K562 (cell line): ENCODE measurements at regions of chr9 and their contacts with region 1.

Region 1: DNA sequence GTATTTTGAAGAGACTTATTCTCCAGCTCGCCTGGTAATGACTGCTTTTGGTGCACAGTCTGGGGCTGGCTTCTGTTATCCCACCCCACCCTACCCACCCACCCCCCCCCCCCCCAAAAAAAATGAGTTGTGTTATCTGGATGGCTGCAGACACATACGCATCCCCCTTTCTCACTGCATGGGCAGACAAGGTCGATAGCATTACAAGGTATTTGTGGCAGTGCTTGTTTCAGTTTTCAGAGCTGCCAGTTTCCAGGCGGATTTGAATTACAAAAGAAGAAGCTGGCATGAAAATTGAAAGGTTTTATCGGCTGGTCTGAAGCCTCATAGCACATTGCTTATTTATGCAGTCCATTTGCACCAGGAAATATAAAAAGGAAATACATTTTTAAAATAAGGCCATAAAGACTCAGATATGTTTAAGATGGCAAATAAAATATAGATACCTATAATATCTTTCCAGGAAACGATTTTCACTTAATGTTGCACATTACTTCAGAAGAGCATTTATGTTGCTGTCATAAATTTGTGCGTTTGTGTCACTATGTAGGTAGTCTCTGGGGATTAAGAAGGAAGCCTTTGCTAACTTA is 85.1 kb upstream of the GRHPR start:
- DNase-seq: peak; percentile 68 to 89 (median 80)
- ATAC-seq: peak; percentile 78
- H3K4me3 ChIP-seq: no peak overlapping the region
- H3K27ac ChIP-seq: peak overlapping the region; percentile 47
- H3K4me1 ChIP-seq: peaks cover 0 to 30% of the 10 kb centered on the region in 2 experiments; a peak in 3 of 5 replicates
- H3K27me3 ChIP-seq: no peaks in the 10 kb centered on the region
- CTCF ChIP-seq: no peak
- EP300 ChIP-seq: peak; percentile 48; the same call in 1 of the 2 replicates
- POLR2A ChIP-seq: no peak
- RAD21 ChIP-seq: no peak

Region 2: DNA sequence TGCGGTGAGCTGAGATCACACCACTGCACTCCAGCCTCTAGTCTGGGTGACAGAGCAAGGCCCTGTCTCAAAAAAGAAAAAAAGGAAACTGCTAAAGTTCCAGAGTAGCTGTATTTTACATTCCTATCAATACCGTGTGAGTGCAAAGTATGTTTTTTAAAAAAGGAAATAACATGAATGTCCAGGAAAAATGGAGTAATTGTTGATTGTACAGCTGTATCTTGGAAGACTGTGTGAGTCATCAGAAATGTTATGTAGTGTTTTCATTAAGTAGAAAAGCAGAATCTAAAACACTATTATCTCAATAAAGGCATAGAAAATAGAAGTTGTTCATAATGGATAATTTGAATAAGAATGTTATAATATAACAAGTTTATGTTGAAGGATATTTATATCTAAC is 163.1 kb before region 1 on chr9:
- CTCF ChIA-PET with region 1: no interaction called
- POLR2A ChIA-PET with region 1: no interaction called
- in situ Hi-C with region 1: no loop called
- intact Hi-C with region 1: no loop called
- DNase-seq: no peak
- ATAC-seq: no peak
- H3K4me3 ChIP-seq: no peak overlapping the region
- H3K27ac ChIP-seq: no peak overlapping the region
- H3K4me1 ChIP-seq: no peaks in the 10 kb centered on the region
- H3K27me3 ChIP-seq: no peaks in the 10 kb centered on the region
- CTCF ChIP-seq: no peak
- EP300 ChIP-seq: no peak
- POLR2A ChIP-seq: no peak
- RAD21 ChIP-seq: no peak

Region 3: DNA sequence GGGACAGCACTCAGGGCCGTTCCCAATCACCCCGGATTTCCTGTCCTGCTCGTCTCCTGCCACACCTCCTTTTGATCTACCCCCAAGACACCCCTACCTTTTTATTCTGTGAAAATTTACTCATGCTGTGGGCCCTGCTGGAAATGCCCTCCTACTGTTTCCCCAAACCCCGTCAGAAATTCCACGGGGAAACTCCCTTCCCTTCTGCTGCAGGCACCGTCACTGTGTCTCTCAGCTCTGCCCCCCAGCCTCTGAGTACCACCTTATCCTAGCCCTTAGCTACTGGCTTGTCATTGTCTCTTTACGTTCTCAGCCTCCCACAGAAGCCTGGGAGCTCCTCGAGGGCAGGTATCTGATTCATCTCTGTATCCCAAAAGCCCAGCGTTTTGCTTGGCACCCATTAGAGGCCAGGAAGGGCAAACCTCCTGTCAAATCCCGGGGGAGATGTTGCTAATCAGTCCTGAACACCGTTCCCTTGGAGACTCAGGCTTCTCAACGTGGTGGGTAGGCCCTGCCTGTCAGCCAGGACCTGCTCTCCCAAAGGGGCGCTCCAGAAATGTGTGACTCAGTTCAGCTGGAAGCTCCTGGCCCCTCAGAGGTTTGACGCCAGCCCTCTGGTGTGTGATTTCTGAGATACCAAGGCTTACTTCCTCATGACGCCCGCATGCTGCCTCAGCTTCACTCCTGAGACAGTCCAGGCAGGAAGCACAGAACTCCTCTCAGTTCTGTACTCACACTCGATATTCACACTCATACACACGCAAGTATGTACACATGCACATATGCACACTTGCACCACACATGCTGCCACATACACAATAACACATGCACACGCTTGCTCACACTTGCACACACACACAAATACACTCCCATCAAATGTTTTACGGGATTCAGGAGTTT is 34.4 kb after region 1 on chr9:
- CTCF ChIA-PET with region 1: no interaction called
- POLR2A ChIA-PET with region 1: no interaction called
- in situ Hi-C with region 1: no loop called
- intact Hi-C with region 1: no loop called
- DNase-seq: peak in 1 of 4 experiments; percentile 33
- ATAC-seq: no peak; the same call in 2 of the 3 replicates
- H3K4me3 ChIP-seq: no peak overlapping the region
- H3K27ac ChIP-seq: no peak overlapping the region
- H3K4me1 ChIP-seq: peaks cover 4 to 5% of the 10 kb centered on the region in 2 experiments; a peak in 2 of 5 replicates
- H3K27me3 ChIP-seq: peaks cover under 1 to 7% of the 10 kb centered on the region in 2 experiments; a peak in 3 of 5 replicates
- CTCF ChIP-seq: no peak
- EP300 ChIP-seq: no peak
- POLR2A ChIP-seq: no peak
- RAD21 ChIP-seq: no peak

Region 4: DNA sequence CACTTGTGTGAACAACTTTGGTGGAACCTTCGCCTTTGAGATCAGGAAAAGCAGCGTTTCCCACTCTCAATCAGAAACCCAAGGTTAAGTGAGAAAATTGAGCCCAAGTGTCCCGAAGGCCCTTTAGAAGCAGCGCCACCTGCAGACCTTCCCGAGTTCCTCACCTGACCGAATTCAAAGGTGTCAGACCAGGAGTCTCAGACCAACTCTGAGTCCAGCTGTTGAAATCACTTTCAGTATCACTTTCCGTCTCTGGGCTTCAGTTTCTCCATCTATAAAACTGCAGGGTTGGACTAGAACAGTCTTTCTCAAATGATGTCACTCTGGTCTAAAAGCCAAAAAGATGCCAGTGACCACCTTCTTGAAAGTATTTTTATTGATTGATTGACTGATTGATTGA is 53.4 kb after region 1 on chr9:
- CTCF ChIA-PET with region 1: no interaction called
- POLR2A ChIA-PET with region 1: no interaction called
- in situ Hi-C with region 1: no loop called
- intact Hi-C with region 1: loop called (anchors 5 kb)
- DNase-seq: peak; percentile 59 to 80 (median 66)
- ATAC-seq: peak; percentile 79
- H3K4me3 ChIP-seq: no peak overlapping the region
- H3K27ac ChIP-seq: no peak overlapping the region
- H3K4me1 ChIP-seq: peaks cover 7 to 8% of the 10 kb centered on the region in 2 experiments; a peak in 2 of 5 replicates
- H3K27me3 ChIP-seq: 0 out of 5 replicates have a peak, but pooled peaks cover 0 to 4% of the 10 kb centered on the region in 2 experiments
- CTCF ChIP-seq: peak; percentile 82 to 84 (median 83)
- EP300 ChIP-seq: no peak
- POLR2A ChIP-seq: no peak
- RAD21 ChIP-seq: peak; percentile 40 to 76; a peak in 3 of 4 replicates

Region 5: GRCh38 chr9:37410969-37411785 is 73.8 kb after region 1 on chr9:
- CTCF ChIA-PET with region 1: no interaction called
- POLR2A ChIA-PET with region 1: no interaction called
- in situ Hi-C with region 1: no loop called
- intact Hi-C with region 1: no loop called
- DNase-seq: peak; percentile 68 to 72 (median 72)
- ATAC-seq: peak; percentile 87
- H3K4me3 ChIP-seq: no peak overlapping the region
- H3K27ac ChIP-seq: no peak overlapping the region
- H3K4me1 ChIP-seq: peaks cover 8 to 26% of the 10 kb centered on the region in 2 experiments; a peak in 4 of 5 replicates
- H3K27me3 ChIP-seq: no peaks in the 10 kb centered on the region; a peak in 1 of 5 replicates
- CTCF ChIP-seq: peak; percentile 61 to 79 (median 70)
- EP300 ChIP-seq: no peak
- POLR2A ChIP-seq: no peak
- RAD21 ChIP-seq: peak in 1 of 2 experiments; percentile 32; a peak in 1 of 4 replicates

Region 6: GRCh38 chr9:37719526-37719925 is 382.1 kb after region 1 on chr9:
- CTCF ChIA-PET with region 1: no interaction called
- POLR2A ChIA-PET with region 1: no interaction called
- in situ Hi-C with region 1: no loop called
- intact Hi-C with region 1: no loop called
- DNase-seq: no peak
- ATAC-seq: peak; percentile 33; the same call in 1 of the 3 replicates
- H3K4me3 ChIP-seq: no peak overlapping the region
- H3K27ac ChIP-seq: no peak overlapping the region
- H3K4me1 ChIP-seq: no peaks in the 10 kb centered on the region
- H3K27me3 ChIP-seq: peaks cover 28 to 33% of the 10 kb centered on the region in 2 experiments
- CTCF ChIP-seq: no peak
- EP300 ChIP-seq: no peak
- POLR2A ChIP-seq: no peak
- RAD21 ChIP-seq: no peak